Mammary epithelial cell (primary cell): ENCODE measurements at regions of chr17 and their contacts with region 1.

Region 1: GRCh38 chr17:5584383-5585286 is at the start of gene NLRP1:
- DNase-seq: peak; percentile 99
- H3K4me3 ChIP-seq: peak within 1 kb of the TSS; percentile 15 to 32 (median 31)
- H3K27ac ChIP-seq: peak within 1 kb of the TSS; percentile 84
- H3K4me1 ChIP-seq: peaks cover 41% of the 10 kb centered on the region
- H3K27me3 ChIP-seq: no peaks in the 10 kb centered on the region
- CTCF ChIP-seq: no peak
- total RNA-seq, gene NLRP1: 27.3 to 48.3 TPM

Region 2: GRCh38 chr17:5249615-5250014 is 335.0 kb before region 1 on chr17:
- CTCF ChIA-PET with region 1: no interaction called
- dilution Hi-C with region 1: no loop called
- in situ Hi-C with region 1: no loop called
- intact Hi-C with region 1: loop called (anchors 10 kb)
- DNase-seq: peak; percentile 70
- H3K4me3 ChIP-seq: no peak overlapping the region
- H3K27ac ChIP-seq: no peak overlapping the region
- H3K4me1 ChIP-seq: no peaks in the 10 kb centered on the region
- H3K27me3 ChIP-seq: no peaks in the 10 kb centered on the region
- CTCF ChIP-seq: peak; percentile 64 to 69

Region 3: DNA sequence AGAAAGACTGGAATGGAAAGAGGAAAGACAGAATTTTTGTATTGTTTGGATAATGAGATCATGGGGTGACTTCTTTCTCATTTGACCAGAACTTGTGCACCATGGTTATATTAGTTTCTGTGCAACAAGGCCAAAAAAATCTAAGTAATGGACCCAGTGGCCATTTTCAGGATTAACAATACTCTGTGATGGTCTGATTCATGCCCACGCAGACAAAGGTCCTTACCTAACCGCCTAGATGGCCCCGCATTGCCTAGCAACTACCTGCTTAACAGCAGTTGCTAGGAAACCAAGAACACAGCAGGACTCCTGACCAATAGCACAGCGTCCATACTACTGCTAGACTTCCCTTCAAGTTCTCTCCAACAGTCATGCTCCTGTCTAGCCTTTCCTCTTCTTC is 75.8 kb before region 1 on chr17:
- CTCF ChIA-PET with region 1: no interaction called
- dilution Hi-C with region 1: no loop called
- in situ Hi-C with region 1: loop called in 1 of 2 experiments (anchors 5 kb)
- intact Hi-C with region 1: no loop called
- DNase-seq: peak; percentile 39
- H3K4me3 ChIP-seq: no peak overlapping the region
- H3K27ac ChIP-seq: no peak overlapping the region
- H3K4me1 ChIP-seq: peaks cover 7% of the 10 kb centered on the region
- H3K27me3 ChIP-seq: no peaks in the 10 kb centered on the region
- CTCF ChIP-seq: no peak

Region 4: GRCh38 chr17:5785867-5786509 is 201.4 kb after region 1 on chr17:
- CTCF ChIA-PET with region 1: no interaction called
- dilution Hi-C with region 1: no loop called
- in situ Hi-C with region 1: no loop called
- intact Hi-C with region 1: loop called (anchors 5 kb)
- DNase-seq: peak; percentile 39
- H3K4me3 ChIP-seq: no peak overlapping the region
- H3K27ac ChIP-seq: no peak overlapping the region
- H3K4me1 ChIP-seq: peaks cover 9% of the 10 kb centered on the region
- H3K27me3 ChIP-seq: peaks cover 9% of the 10 kb centered on the region
- CTCF ChIP-seq: no peak

Region 5: GRCh38 chr17:6421700-6422604 is 837.3 kb after region 1 on chr17:
- CTCF ChIA-PET with region 1: no interaction called
- dilution Hi-C with region 1: no loop called
- in situ Hi-C with region 1: loop called (anchors 5 kb)
- intact Hi-C with region 1: loop called (anchors 1 kb)
- DNase-seq: peak; percentile 70
- H3K4me3 ChIP-seq: no peak overlapping the region
- H3K27ac ChIP-seq: no peak overlapping the region
- H3K4me1 ChIP-seq: no peaks in the 10 kb centered on the region
- H3K27me3 ChIP-seq: no peaks in the 10 kb centered on the region
- CTCF ChIP-seq: peak; percentile 71 to 95